ENCODE measurements at regions of chr14 and their contacts with region 1.

Region 1: GRCh38 chr14:49692811-49693734 is at the start of gene KLHDC1:
- DNase-seq: peak; percentile 71 to 85 (median 77)
- H3K4me3 ChIP-seq: peak within 1 kb of the TSS; percentile 76
- H3K4me3 Mint-ChIP-seq: peak within 1 kb of the TSS; percentile 78 to 94 (median 88)
- H3K27ac ChIP-seq: peak within 1 kb of the TSS; percentile 70
- H3K27ac Mint-ChIP-seq: peak within 1 kb of the TSS; percentile 78 to 97 (median 92)
- H3K4me1 ChIP-seq: peaks cover 26% of the 10 kb centered on the region
- H3K4me1 Mint-ChIP-seq: peaks cover 21 to 37% (median 34%) of the 10 kb centered on the region in 3 donors
- H3K27me3 ChIP-seq: no peaks in the 10 kb centered on the region
- H3K27me3 Mint-ChIP-seq: no peaks in the 10 kb centered on the region
- total RNA-seq, gene KLHDC1: 2.0 to 2.7 TPM

Region 2: DNA sequence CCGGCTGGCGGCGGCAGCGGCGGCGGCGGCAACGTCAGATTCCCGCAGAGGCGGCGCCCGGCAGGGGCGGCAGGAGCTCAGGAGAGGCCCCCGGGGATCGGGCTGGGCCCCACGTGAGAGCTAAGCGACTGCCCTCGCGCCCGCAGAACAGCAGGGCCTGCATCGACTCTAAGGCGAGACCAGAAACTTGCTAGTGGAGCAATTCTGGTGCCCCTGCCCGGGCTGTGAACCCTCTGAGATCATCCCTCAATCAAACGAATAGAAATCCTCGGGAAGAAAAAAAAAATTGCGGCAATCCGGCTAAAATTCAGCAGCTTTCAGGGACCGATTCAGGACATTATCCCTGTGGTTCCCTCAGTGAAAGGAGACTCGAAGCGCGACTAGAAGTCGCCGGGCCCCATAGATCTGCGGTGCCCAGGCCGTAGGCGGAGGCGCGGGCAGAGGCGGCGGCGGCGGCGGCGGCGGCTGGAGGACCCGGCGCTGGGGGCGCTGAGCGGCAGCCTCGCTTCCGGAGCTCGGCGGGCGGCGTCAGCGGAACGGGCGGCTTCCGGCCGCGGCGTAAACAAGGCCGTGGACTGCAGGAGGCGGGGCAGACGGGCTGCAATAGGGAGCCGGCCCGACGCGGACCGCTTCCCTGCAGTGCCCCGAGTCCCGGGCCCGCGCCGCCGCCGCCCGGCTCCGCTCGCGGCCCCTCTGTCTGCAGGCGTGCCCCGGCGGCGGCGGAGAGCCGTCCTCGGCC is 74.7 kb after region 1 on chr14 and contains the start of gene KLHDC2:
- CTCF ChIA-PET with region 1: interaction called, 7 read pairs
- POLR2A ChIA-PET with region 1: interaction called, 17 read pairs
- DNase-seq: peak; percentile 83 to 91 (median 89)
- H3K4me3 ChIP-seq: peak within 1 kb of the TSS; percentile 99
- H3K4me3 Mint-ChIP-seq: peak within 1 kb of the TSS; percentile 96 to 99 (median 98)
- H3K27ac ChIP-seq: peak within 1 kb of the TSS; percentile 98
- H3K27ac Mint-ChIP-seq: peak within 1 kb of the TSS; percentile 98 to 100 (median 99)
- H3K4me1 ChIP-seq: peaks cover 28% of the 10 kb centered on the region
- H3K4me1 Mint-ChIP-seq: peaks cover 30 to 43% (median 42%) of the 10 kb centered on the region in 3 donors
- H3K27me3 ChIP-seq: no peaks in the 10 kb centered on the region
- H3K27me3 Mint-ChIP-seq: peaks cover 0 to 3% of the 10 kb centered on the region in 2 donors
- total RNA-seq, gene KLHDC2: 28.9 to 29.0 TPM

Region 3: DNA sequence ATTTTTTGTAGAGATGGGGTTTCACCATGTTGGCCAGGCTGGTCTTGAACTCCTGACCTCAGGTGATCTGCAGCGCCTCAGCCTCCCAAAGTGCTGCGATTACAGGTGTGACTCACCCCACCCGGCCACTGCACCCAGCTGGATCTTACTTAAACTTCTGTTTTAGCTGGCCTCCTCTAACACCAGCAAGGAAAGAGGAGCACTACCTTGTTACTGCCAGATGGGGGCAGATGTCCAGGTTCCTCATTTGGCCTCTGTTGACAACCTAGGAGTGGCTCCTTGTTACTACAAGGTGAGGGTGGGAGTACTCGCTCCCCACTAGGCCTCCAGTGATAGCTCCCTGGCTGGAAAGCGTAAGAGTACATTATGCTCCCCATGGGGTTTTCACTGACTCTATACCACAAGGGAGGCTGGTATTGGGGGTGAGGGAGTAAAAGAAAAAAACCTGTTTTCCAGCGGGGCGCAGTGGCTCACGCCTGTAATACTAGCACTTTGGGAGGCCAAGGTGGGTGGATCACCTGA is 186.7 kb after region 1 on chr14:
- CTCF ChIA-PET with region 1: no interaction called
- POLR2A ChIA-PET with region 1: no interaction called
- DNase-seq: peak in 4 of 5 donors; percentile 34 to 72 (median 56)
- H3K4me3 ChIP-seq: no peak overlapping the region
- H3K4me3 Mint-ChIP-seq: no peak overlapping the region
- H3K27ac ChIP-seq: no peak overlapping the region
- H3K27ac Mint-ChIP-seq: peak overlapping the region in 6 of 8 donors; percentile 36 to 96 (median 62)
- H3K4me1 ChIP-seq: peaks cover 11% of the 10 kb centered on the region
- H3K4me1 Mint-ChIP-seq: peaks cover 3 to 12% (median 10%) of the 10 kb centered on the region in 3 donors
- H3K27me3 ChIP-seq: no peaks in the 10 kb centered on the region
- H3K27me3 Mint-ChIP-seq: no peaks in the 10 kb centered on the region

Measured in CD8-positive, alpha-beta memory T cell (primary cell).